Activated CD4-positive, alpha-beta memory T cell treated with anti-CD3 and anti-CD28 coated beads, Interleukin-2, amount 10 ng/mL, durations not matched to agents 7 days and 5 days (primary cell): ENCODE measurements at regions of chr17 and their contacts with region 1.

Region 1: DNA sequence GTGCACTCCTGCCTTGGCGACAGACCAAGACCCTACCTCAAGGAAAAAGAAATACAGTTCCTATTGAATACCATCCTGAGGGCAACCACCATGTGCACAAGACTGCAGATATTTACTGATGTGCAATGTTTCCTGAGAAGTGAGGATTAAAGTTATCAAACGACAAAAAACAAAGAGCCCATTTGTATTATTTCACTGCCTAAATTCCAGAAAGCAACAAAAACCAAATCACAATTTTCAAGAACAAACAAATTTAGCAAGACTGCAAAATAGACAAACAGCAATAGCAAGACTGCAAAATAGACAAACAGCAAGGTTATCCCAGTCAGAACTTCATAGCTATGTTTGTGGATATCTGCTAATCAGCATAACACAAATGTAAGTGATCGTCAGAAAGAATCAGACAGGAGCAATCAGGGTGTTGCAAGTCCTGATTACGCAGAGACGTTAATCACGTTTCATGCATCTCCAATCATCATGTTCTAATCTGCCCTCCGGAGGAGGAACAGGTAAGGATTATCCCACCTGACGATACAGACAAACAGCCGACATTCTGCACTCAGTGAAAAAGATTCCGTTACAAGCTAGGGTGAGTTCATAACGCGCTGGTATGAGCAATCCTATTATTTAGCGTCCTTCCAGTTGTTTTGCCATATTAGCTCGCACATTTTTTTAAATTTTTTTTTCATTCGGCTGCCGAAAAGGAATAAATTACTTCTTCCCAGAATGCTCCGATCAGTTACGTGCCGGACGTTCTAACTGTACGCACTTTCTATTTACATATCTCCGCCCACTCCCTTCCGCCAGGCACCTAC is 2.9 kb downstream of the TMEM107 start:
- DNase-seq: peak; percentile 84
- H3K4me3 Mint-ChIP-seq: peak overlapping the region; percentile 76
- H3K27ac Mint-ChIP-seq: peak overlapping the region; percentile 95
- H3K4me1 Mint-ChIP-seq: peaks cover 57% of the 10 kb centered on the region
- H3K27me3 Mint-ChIP-seq: no peaks in the 10 kb centered on the region

Region 2: GRCh38 chr17:7750321-7750821 is 422.9 kb before region 1 on chr17:
- CTCF ChIA-PET with region 1: no interaction called
- POLR2A ChIA-PET with region 1: no interaction called
- DNase-seq: no peak
- H3K4me3 Mint-ChIP-seq: no peak overlapping the region
- H3K27ac Mint-ChIP-seq: no peak overlapping the region
- H3K4me1 Mint-ChIP-seq: peaks cover 5% of the 10 kb centered on the region
- H3K27me3 Mint-ChIP-seq: peaks cover 22% of the 10 kb centered on the region

Region 3: DNA sequence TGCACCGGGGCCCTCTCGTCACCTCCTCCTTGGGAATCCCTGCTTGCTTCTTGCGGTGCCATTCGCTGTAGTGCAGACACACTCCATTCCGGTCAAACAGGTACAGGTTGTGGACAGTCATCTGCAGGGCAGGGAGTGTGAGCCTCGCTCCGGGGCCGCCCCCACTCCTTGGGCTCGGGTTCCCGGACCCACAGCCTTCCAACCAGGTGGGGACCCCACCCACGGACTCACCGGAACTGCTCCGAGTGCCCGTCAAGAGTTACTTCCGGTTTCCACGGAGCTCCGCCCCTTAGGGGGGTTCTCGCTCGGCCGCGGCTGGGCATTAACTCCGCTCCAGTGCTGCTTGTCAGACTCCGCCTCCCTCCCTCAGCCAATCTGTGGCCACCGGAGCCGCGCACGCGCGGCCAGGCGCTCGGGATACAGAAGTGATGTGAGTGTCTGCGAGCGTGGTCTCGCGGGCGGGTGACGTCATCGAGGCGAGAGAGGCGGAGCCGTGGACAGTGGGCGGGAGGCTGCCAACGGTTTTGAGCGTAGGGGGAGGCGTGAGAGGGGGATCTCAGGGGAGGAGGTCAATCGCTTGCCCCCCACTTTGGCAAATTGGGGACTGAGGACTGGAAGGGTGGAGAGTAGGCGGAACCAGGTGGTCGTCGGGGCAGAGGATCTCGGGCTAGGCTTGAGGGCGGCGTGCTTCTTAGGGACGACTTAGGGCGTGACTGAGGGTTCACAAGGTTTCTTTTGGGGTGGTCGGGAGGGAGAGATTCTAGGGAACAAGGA is 241.4 kb before region 1 on chr17 and contains the starts of genes CNTROB and TRAPPC1:
- CTCF ChIA-PET with region 1: no interaction called
- POLR2A ChIA-PET with region 1: interaction called, 10 read pairs
- DNase-seq: peak; percentile 100
- H3K4me3 Mint-ChIP-seq: peak within 1 kb of the TSS; percentile 93
- H3K27ac Mint-ChIP-seq: peak within 1 kb of the TSS; percentile 87
- H3K4me1 Mint-ChIP-seq: peaks cover 56% of the 10 kb centered on the region
- H3K27me3 Mint-ChIP-seq: no peaks in the 10 kb centered on the region
- total RNA-seq, gene CNTROB: 58.8 to 64.6 TPM
- total RNA-seq, gene TRAPPC1: 238 to 244 TPM

Region 4: GRCh38 chr17:8087075-8087944 is 86.0 kb before region 1 on chr17 and contains the start of gene ALOX12B:
- CTCF ChIA-PET with region 1: no interaction called
- POLR2A ChIA-PET with region 1: no interaction called
- DNase-seq: no peak
- H3K4me3 Mint-ChIP-seq: no peak within 1 kb of the TSS
- H3K27ac Mint-ChIP-seq: no peak within 1 kb of the TSS
- H3K4me1 Mint-ChIP-seq: no peaks in the 10 kb centered on the region
- H3K27me3 Mint-ChIP-seq: peaks cover 22% of the 10 kb centered on the region
- total RNA-seq, gene ALOX12B: 0.20 to 0.38 TPM

Region 5: GRCh38 chr17:8125157-8125946 is 47.9 kb before region 1 on chr17:
- CTCF ChIA-PET with region 1: interaction called, 3 read pairs
- POLR2A ChIA-PET with region 1: interaction called, 49 read pairs
- DNase-seq: peak; percentile 86
- H3K4me3 Mint-ChIP-seq: peak overlapping the region; percentile 93
- H3K27ac Mint-ChIP-seq: peak overlapping the region; percentile 71
- H3K4me1 Mint-ChIP-seq: peaks cover 58% of the 10 kb centered on the region
- H3K27me3 Mint-ChIP-seq: peaks cover 51% of the 10 kb centered on the region

Region 6: GRCh38 chr17:8156246-8156992 is 16.8 kb before region 1 on chr17:
- CTCF ChIA-PET with region 1: interaction called, 9 read pairs
- POLR2A ChIA-PET with region 1: interaction called, 653 read pairs
- DNase-seq: peak; percentile 100
- H3K4me3 Mint-ChIP-seq: no peak overlapping the region
- H3K27ac Mint-ChIP-seq: no peak overlapping the region
- H3K4me1 Mint-ChIP-seq: peaks cover 51% of the 10 kb centered on the region
- H3K27me3 Mint-ChIP-seq: no peaks in the 10 kb centered on the region

Region 7: GRCh38 chr17:8209909-8210760 is 36.9 kb after region 1 on chr17 and contains the start of gene AURKB:
- CTCF ChIA-PET with region 1: no interaction called
- POLR2A ChIA-PET with region 1: interaction called, 66 read pairs
- DNase-seq: peak; percentile 94
- H3K4me3 Mint-ChIP-seq: peak within 1 kb of the TSS; percentile 87
- H3K27ac Mint-ChIP-seq: peak within 1 kb of the TSS; percentile 86
- H3K4me1 Mint-ChIP-seq: peaks cover 39% of the 10 kb centered on the region
- H3K27me3 Mint-ChIP-seq: no peaks in the 10 kb centered on the region
- total RNA-seq, gene AURKB: 160 to 167 TPM

Region 8: DNA sequence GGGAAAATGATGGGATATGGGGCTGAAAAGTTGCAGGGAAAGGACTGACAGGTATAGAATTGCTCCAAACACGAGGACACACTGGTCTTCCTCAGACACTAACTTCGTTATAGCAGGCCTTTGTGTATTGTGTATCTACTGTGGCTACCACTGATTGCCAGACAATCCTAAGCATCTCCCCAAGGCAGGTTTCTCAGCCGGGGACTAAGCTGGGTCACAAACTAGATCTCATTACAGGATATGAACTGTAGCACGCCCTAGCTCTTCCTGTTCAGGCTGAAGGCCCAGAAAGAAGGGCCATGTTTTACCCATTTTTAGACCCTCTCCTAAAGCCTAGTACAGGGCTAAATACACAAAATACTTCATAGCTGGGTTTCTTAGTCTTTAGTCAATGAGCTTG is 110.1 kb after region 1 on chr17:
- CTCF ChIA-PET with region 1: no interaction called
- POLR2A ChIA-PET with region 1: interaction called, 16 read pairs
- DNase-seq: no peak
- H3K4me3 Mint-ChIP-seq: no peak overlapping the region
- H3K27ac Mint-ChIP-seq: peak overlapping the region; percentile 77
- H3K4me1 Mint-ChIP-seq: peaks cover 39% of the 10 kb centered on the region
- H3K27me3 Mint-ChIP-seq: no peaks in the 10 kb centered on the region